K562 (cell line): ENCODE measurements at regions of chr6 and their contacts with region 1.

Region 1: GRCh38 chr6:143842902-143843676 is at the start of gene LTV1:
- DNase-seq: peak; percentile 99 to 100 (median 100)
- ATAC-seq: peak; percentile 99
- H3K4me3 ChIP-seq: peak within 1 kb of the TSS; percentile 78
- H3K27ac ChIP-seq: peak within 1 kb of the TSS; percentile 94
- H3K4me1 ChIP-seq: peaks cover 2 to 9% of the 10 kb centered on the region in 2 experiments; a peak in 4 of 5 replicates
- H3K27me3 ChIP-seq: no peaks in the 10 kb centered on the region
- CTCF ChIP-seq: peak in 2 of 3 experiments; percentile 4 to 32; a peak in 2 of 6 replicates
- EP300 ChIP-seq: no peak
- POLR2A ChIP-seq: peak; percentile 95
- RAD21 ChIP-seq: peak; percentile 17 to 27; a peak in 3 of 4 replicates
- polyA plus RNA-seq, gene LTV1: 88.3 to 162 TPM

Region 2: DNA sequence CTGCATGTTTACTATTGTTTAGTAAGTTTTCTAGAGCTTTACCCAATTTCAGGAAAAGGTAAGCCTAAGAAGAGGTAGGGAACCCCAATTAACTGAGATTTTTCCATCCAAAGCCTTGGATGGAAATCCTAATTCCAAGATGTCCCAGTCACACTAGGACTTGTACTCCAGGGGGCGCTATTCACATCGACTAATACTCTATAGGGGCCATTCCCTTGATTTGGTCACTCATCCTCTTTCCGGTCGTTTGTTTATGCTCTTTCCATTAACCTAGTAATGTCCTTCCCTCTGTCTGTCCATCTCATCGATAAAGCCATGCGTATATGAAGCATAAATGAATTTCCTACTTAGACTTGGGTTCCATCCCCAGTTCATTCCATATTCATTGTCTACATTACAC is 250.8 kb before region 1 on chr6:
- CTCF ChIA-PET with region 1: no interaction called
- POLR2A ChIA-PET with region 1: no interaction called
- in situ Hi-C with region 1: no loop called
- intact Hi-C with region 1: loop called (anchors 5 kb)
- DNase-seq: peak; percentile 70 to 75 (median 72)
- ATAC-seq: peak; percentile 91
- H3K4me3 ChIP-seq: no peak overlapping the region
- H3K27ac ChIP-seq: no peak overlapping the region
- H3K4me1 ChIP-seq: no peaks in the 10 kb centered on the region
- H3K27me3 ChIP-seq: no peaks in the 10 kb centered on the region
- CTCF ChIP-seq: peak; percentile 66 to 83 (median 77)
- EP300 ChIP-seq: no peak
- POLR2A ChIP-seq: no peak
- RAD21 ChIP-seq: peak; percentile 65 to 83

Region 3: GRCh38 chr6:143677891-143678791 is 164.9 kb before region 1 on chr6 and contains the start of gene PHACTR2:
- CTCF ChIA-PET with region 1: no interaction called
- POLR2A ChIA-PET with region 1: interaction called, 3 read pairs
- in situ Hi-C with region 1: no loop called
- intact Hi-C with region 1: loop called (anchors 5 kb)
- DNase-seq: peak; percentile 74 to 92 (median 82)
- ATAC-seq: peak; percentile 96
- H3K4me3 ChIP-seq: peak within 1 kb of the TSS; percentile 76
- H3K27ac ChIP-seq: peak within 1 kb of the TSS; percentile 75
- H3K4me1 ChIP-seq: peaks cover 5% of the 10 kb centered on the region in 2 experiments; a peak in 2 of 5 replicates
- H3K27me3 ChIP-seq: no peaks in the 10 kb centered on the region
- CTCF ChIP-seq: no peak
- EP300 ChIP-seq: no peak
- POLR2A ChIP-seq: peak; percentile 83
- RAD21 ChIP-seq: peak in 1 of 2 experiments; percentile 25; a peak in 2 of 4 replicates
- polyA plus RNA-seq, gene PHACTR2: 5.3 to 13.9 TPM

Region 4: DNA sequence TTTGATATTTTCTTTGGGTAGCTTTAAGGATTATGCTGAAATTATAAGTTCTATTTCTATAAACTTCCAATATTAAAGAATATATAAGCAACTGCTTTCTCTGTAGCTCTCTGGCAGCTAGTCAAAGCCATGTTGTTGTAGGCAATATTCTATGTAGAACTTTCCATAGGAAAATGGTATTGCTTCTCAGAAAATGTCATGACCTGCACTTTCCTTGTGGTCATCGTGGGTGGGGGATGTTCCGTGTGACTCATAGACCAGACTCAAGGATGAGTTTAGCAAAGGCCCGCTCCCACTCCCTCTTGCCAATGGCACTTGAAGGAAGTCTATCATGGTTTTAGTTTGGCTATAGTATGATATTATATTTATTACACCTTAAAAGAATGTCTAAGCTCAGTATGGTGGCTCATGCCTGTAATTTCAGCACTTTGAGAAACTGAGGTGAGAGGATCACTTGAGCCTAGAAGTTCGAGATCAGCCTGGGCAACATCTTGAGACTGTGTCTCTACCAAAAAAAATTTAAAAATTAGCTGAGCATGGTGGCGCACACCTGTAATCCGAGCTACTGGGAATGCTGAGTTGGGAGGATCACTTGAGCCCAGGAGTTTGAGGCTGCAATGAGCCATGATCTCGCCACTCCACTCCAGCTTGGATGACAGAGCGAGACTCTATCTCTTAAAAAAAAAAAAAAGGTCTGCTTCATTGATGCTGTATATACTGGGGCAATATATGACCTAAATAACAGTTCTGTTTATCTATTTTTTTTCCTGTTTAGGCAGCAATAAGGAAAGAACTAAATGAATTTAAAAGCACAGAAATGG is 36.6 kb before region 1 on chr6:
- CTCF ChIA-PET with region 1: no interaction called
- POLR2A ChIA-PET with region 1: interaction called, 11 read pairs
- in situ Hi-C with region 1: no loop called
- intact Hi-C with region 1: loop called (anchors 2 kb)
- DNase-seq: peak; percentile 76 to 95 (median 85)
- ATAC-seq: peak; percentile 81
- H3K4me3 ChIP-seq: no peak overlapping the region
- H3K27ac ChIP-seq: peak overlapping the region; percentile 84
- H3K4me1 ChIP-seq: peaks cover 47 to 52% of the 10 kb centered on the region in 2 experiments
- H3K27me3 ChIP-seq: no peaks in the 10 kb centered on the region
- CTCF ChIP-seq: no peak
- EP300 ChIP-seq: peak; percentile 95
- POLR2A ChIP-seq: no peak
- RAD21 ChIP-seq: peak; percentile 6 to 20; a peak in 2 of 4 replicates

Region 5: DNA sequence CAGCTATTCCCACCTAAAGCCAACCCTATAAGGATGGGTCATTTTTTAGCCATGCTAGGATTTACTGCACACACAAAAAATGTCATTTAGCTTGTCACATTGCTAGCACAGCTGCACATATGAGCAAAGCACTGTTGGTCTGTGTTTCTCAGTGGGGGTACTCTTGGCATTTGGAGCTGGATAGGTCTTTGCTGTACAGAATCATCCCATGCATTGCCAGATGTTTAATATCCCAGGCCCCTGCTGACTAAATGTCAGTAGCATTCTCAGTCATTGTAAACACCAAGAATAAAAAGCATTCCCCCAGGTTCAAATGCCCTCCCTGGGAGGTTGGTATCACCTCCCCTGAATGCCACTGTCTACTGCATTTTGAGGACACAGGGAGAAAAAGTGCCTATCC is 14.5 kb before region 1 on chr6:
- CTCF ChIA-PET with region 1: no interaction called
- POLR2A ChIA-PET with region 1: interaction called, 13 read pairs
- in situ Hi-C with region 1: no loop called
- intact Hi-C with region 1: no loop called
- DNase-seq: no peak
- ATAC-seq: no peak
- H3K4me3 ChIP-seq: no peak overlapping the region
- H3K27ac ChIP-seq: no peak overlapping the region
- H3K4me1 ChIP-seq: no peaks in the 10 kb centered on the region; a peak in 1 of 5 replicates
- H3K27me3 ChIP-seq: no peaks in the 10 kb centered on the region
- CTCF ChIP-seq: no peak
- EP300 ChIP-seq: no peak
- POLR2A ChIP-seq: no peak
- RAD21 ChIP-seq: no peak

Region 6: GRCh38 chr6:144162977-144163376 is 319.9 kb after region 1 on chr6:
- CTCF ChIA-PET with region 1: no interaction called
- POLR2A ChIA-PET with region 1: no interaction called
- in situ Hi-C with region 1: no loop called
- intact Hi-C with region 1: no loop called
- DNase-seq: no peak
- ATAC-seq: no peak
- H3K4me3 ChIP-seq: no peak overlapping the region
- H3K27ac ChIP-seq: no peak overlapping the region
- H3K4me1 ChIP-seq: no peaks in the 10 kb centered on the region
- H3K27me3 ChIP-seq: peaks cover 0 to 2% of the 10 kb centered on the region in 2 experiments; a peak in 1 of 5 replicates
- CTCF ChIP-seq: no peak
- EP300 ChIP-seq: no peak
- POLR2A ChIP-seq: no peak
- RAD21 ChIP-seq: no peak